MCF 10A (cell line): ENCODE measurements at regions of chr1 and their contacts with region 1.

Region 1: GRCh38 chr1:97920832-97921571 is at the start of gene DPYD:
- DNase-seq: peak; percentile 84
- H3K4me3 Mint-ChIP-seq: peak within 1 kb of the TSS; percentile 98
- H3K27ac Mint-ChIP-seq: peak within 1 kb of the TSS; percentile 89
- H3K4me1 Mint-ChIP-seq: peaks cover 34% of the 10 kb centered on the region
- H3K27me3 Mint-ChIP-seq: no peaks in the 10 kb centered on the region
- CTCF ChIP-seq: no peak
- total RNA-seq, gene DPYD: 37.4 and 48.2 TPM in 2 replicates

Region 2: DNA sequence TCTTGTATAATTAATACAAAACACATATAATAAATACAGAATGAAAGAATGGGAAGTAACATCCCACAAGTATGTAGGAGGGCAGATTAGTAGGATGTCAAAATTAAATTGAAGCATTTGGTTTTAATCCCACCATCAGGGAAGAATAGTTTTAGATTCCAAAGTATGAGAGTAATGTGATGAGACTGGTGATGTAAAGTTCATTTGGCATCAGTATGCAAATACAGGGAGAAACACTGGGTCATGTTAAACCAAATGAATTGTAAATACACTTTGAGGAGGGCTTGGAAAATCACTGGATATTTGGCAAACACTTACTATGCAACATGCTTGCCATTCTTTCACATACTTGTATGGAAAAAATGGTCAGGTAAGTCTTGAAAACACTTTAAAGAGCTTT is 358.9 kb before region 1 on chr1:
- CTCF ChIA-PET with region 1: no interaction called
- POLR2A ChIA-PET with region 1: no interaction called
- intact Hi-C with region 1: no loop called
- DNase-seq: no peak
- H3K4me3 Mint-ChIP-seq: no peak overlapping the region
- H3K27ac Mint-ChIP-seq: no peak overlapping the region
- H3K4me1 Mint-ChIP-seq: no peaks in the 10 kb centered on the region
- H3K27me3 Mint-ChIP-seq: no peaks in the 10 kb centered on the region
- CTCF ChIP-seq: no peak

Region 3: GRCh38 chr1:97834899-97835298 is 86.1 kb before region 1 on chr1:
- CTCF ChIA-PET with region 1: no interaction called
- POLR2A ChIA-PET with region 1: interaction called, 3 read pairs
- intact Hi-C with region 1: loop called (anchors 5 kb)
- DNase-seq: no peak
- H3K4me3 Mint-ChIP-seq: no peak overlapping the region
- H3K27ac Mint-ChIP-seq: no peak overlapping the region
- H3K4me1 Mint-ChIP-seq: no peaks in the 10 kb centered on the region
- H3K27me3 Mint-ChIP-seq: no peaks in the 10 kb centered on the region
- CTCF ChIP-seq: no peak

Region 4: DNA sequence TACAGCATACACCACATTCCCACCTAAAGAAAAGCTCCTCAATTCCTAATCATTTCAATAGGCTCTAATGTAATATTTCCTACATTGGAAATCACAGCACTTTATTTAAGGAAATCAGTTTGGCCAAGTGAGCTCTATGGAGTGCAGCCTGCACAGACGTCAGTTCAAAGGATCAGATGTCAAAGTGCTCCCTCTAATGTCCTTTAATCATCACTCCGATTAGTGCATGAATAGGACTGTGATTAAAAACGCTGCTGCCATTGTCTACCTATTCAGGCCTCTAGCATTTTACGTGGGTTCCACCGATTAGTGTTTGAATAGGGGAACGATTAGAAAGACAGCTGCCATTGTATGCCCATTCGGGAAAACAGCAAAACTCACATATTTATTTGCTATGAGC is 50.4 kb before region 1 on chr1:
- CTCF ChIA-PET with region 1: no interaction called
- POLR2A ChIA-PET with region 1: interaction called, 4 read pairs
- intact Hi-C with region 1: loop called (anchors 5 kb)
- DNase-seq: no peak
- H3K4me3 Mint-ChIP-seq: no peak overlapping the region
- H3K27ac Mint-ChIP-seq: no peak overlapping the region
- H3K4me1 Mint-ChIP-seq: peaks cover 6% of the 10 kb centered on the region
- H3K27me3 Mint-ChIP-seq: no peaks in the 10 kb centered on the region
- CTCF ChIP-seq: no peak

Region 5: DNA sequence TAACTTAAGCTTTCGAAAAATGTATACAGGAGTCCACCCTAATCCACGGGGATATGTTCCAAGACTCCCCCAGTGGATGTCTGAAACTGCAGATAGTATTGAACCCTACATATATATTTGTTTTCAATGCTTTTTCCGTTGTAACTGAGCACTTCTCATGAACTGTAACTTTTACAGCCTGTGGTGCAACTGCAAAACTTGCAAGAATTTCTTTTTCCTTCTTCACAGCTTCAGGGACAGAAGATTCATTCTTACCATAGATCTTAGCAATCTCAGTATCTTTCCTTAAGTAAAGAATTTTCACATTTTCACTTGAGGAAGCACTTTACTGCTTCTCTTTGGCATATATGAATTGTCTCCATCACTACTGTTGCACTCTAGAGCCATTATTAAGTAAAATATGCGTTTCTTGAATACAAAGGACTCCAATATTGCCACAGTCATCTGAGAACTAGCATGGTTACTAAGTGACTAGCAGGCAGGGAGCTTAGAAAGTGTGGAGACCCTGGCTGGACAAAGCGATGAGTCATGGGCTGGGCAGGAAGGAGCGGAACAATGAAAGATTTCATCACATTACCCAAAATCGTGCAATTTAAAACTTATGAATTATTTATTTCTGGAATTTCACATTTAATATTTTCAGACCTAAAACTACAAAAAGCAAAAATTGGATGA is 14.3 kb before region 1 on chr1:
- CTCF ChIA-PET with region 1: interaction called, 20 read pairs
- POLR2A ChIA-PET with region 1: interaction called, 377 read pairs
- intact Hi-C with region 1: loop called (anchors 1 kb)
- DNase-seq: peak; percentile 93
- H3K4me3 Mint-ChIP-seq: peak overlapping the region; percentile 38
- H3K27ac Mint-ChIP-seq: no peak overlapping the region
- H3K4me1 Mint-ChIP-seq: peaks cover 12% of the 10 kb centered on the region
- H3K27me3 Mint-ChIP-seq: no peaks in the 10 kb centered on the region
- CTCF ChIP-seq: no peak

Region 6: GRCh38 chr1:97960470-97960869 is 39.5 kb after region 1 on chr1:
- CTCF ChIA-PET with region 1: no interaction called
- POLR2A ChIA-PET with region 1: no interaction called
- intact Hi-C with region 1: no loop called
- DNase-seq: no peak
- H3K4me3 Mint-ChIP-seq: no peak overlapping the region
- H3K27ac Mint-ChIP-seq: no peak overlapping the region
- H3K4me1 Mint-ChIP-seq: no peaks in the 10 kb centered on the region
- H3K27me3 Mint-ChIP-seq: no peaks in the 10 kb centered on the region
- CTCF ChIP-seq: no peak

Region 7: GRCh38 chr1:98048244-98048643 is 127.2 kb after region 1 on chr1:
- CTCF ChIA-PET with region 1: no interaction called
- POLR2A ChIA-PET with region 1: interaction called, 9 read pairs
- intact Hi-C with region 1: loop called (anchors 2 kb)
- DNase-seq: peak; percentile 78
- H3K4me3 Mint-ChIP-seq: peak overlapping the region; percentile 51
- H3K27ac Mint-ChIP-seq: no peak overlapping the region
- H3K4me1 Mint-ChIP-seq: peaks cover 17% of the 10 kb centered on the region
- H3K27me3 Mint-ChIP-seq: no peaks in the 10 kb centered on the region
- CTCF ChIP-seq: no peak

Region 8: DNA sequence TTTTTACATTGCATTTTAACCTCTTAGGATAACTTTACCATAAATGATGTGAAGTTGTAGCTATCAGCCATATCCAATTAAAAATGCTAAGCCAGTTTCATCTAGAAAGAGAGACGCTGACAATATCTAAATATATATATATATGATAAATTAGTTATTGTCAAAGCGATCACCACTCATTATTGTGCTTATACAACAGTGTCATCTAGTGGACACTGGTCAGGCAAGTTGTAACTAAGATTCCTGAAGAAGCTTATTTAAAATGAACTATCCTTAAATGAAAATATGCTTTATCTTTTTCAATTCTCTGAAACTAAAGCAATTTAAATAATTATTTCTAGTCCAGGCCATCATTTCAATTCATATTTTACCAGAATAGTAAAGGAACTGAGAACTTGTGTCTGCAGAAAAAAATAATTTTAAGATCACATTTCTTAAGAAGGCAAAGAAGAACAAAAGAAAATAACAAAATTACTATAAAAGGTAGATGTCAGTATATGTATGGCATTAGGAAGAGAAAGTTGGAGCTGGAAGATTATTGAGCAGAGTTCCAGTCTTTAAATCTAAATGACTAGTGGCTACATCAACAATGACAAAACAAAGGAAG is 547.2 kb after region 1 on chr1:
- CTCF ChIA-PET with region 1: interaction called, 8 read pairs
- POLR2A ChIA-PET with region 1: interaction called, 4 read pairs
- intact Hi-C with region 1: loop called (anchors 5 kb)
- DNase-seq: peak; percentile 67
- H3K4me3 Mint-ChIP-seq: no peak overlapping the region
- H3K27ac Mint-ChIP-seq: no peak overlapping the region
- H3K4me1 Mint-ChIP-seq: peaks cover 29% of the 10 kb centered on the region
- H3K27me3 Mint-ChIP-seq: no peaks in the 10 kb centered on the region
- CTCF ChIP-seq: peak; percentile 89